Transverse colon (tissue), 4 donors: ENCODE measurements at regions of chrX and their contacts with region 1.

Region 1: GRCh38 chrX:35890699-35891098 is 28.8 kb upstream of the CFAP47 start:
- DNase-seq: peak; percentile 38
- H3K4me3 ChIP-seq: no peak overlapping the region
- H3K27ac ChIP-seq: no peak overlapping the region
- H3K4me1 ChIP-seq: no peaks in the 10 kb centered on the region
- H3K27me3 ChIP-seq: no peaks in the 10 kb centered on the region
- CTCF ChIP-seq: peak in 4 of 5 experiments; percentile 48 to 55 (median 50)
- EP300 ChIP-seq: no peak
- POLR2A ChIP-seq: no peak

Region 2: DNA sequence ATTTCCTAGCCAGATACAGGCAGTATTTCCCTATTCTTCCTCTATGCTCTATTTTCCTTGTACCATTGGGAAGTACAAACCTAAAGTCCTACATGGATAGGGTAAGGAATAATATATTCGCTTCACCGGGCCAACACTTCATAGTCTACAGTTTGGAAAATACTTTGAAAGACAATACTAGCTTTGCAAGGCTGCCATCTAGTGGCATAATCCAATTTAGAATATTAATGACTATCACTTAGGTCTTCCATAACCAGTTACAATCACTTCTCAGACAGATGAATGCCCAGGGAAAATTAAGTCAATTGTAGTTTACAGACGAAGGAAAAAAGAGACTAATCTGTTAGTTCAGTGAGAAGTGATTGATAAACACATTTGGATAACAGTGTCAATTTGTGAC is 976.4 kb after region 1 on chrX:
- in situ Hi-C with region 1: loop called in 1 of 4 experiments (anchors 25 kb)
- intact Hi-C with region 1: no loop called
- DNase-seq: no peak
- H3K4me3 ChIP-seq: no peak overlapping the region
- H3K27ac ChIP-seq: no peak overlapping the region
- H3K4me1 ChIP-seq: no peaks in the 10 kb centered on the region
- H3K27me3 ChIP-seq: no peaks in the 10 kb centered on the region
- CTCF ChIP-seq: peak; percentile 30 to 60 (median 40)
- EP300 ChIP-seq: no peak
- POLR2A ChIP-seq: no peak

Region 3: GRCh38 chrX:37644381-37645305 is 1753.9 kb after region 1 on chrX:
- in situ Hi-C with region 1: no loop called
- intact Hi-C with region 1: no loop called
- DNase-seq: peak; percentile 29
- H3K4me3 ChIP-seq: no peak overlapping the region
- H3K27ac ChIP-seq: no peak overlapping the region
- H3K4me1 ChIP-seq: no peaks in the 10 kb centered on the region
- H3K27me3 ChIP-seq: no peaks in the 10 kb centered on the region
- CTCF ChIP-seq: no peak
- EP300 ChIP-seq: no peak
- POLR2A ChIP-seq: no peak